ENCODE measurements at regions of chr4 and their contacts with region 1.

Region 1: DNA sequence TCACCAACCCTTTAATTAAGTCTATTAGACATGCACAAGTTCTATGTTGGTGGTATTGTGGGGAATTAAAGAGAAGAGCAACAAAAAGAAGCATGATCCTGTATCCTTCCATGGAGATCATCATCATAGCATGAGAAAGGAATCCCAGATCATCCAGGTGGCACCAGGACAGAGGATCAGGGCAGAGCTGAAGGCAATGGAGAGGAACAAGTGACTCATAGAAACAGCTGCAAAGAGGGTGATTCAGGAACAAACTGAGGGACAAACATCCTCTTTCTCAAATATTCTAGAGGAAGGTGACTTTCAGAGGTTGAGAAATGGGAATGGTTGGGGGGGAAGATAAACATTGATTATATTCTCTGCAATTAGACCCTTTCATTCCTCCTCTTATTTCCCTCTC is 105.5 kb upstream of the OTUD4 start:
- DNase-seq: no peak
- ATAC-seq: no peak
- H3K4me3 ChIP-seq: no peak overlapping the region
- H3K27ac ChIP-seq: no peak overlapping the region
- H3K4me1 ChIP-seq: peaks cover 0 to 8% (median 0%) of the 10 kb centered on the region in 12 donors
- H3K27me3 ChIP-seq: no peaks in the 10 kb centered on the region
- CTCF ChIP-seq: no peak
- POLR2A ChIP-seq: no peak

Region 2: GRCh38 chr4:145097821-145098674 is 187.9 kb before region 1 on chr4 and contains the starts of genes ABCE1 and ANAPC10:
- intact Hi-C with region 1: no loop called
- DNase-seq: peak; percentile 95 to 97 (median 96)
- ATAC-seq: peak; percentile 98 to 99 (median 98)
- H3K4me3 ChIP-seq: peak within 1 kb of the TSS; percentile 58 to 82 (median 70)
- H3K27ac ChIP-seq: peak within 1 kb of the TSS; percentile 73 to 95 (median 91)
- H3K4me1 ChIP-seq: peaks cover 3 to 55% (median 33%) of the 10 kb centered on the region in 12 donors
- H3K27me3 ChIP-seq: no peaks in the 10 kb centered on the region
- CTCF ChIP-seq: peak in 9 of 12 donors; percentile 9 to 50 (median 32)
- POLR2A ChIP-seq: peak in 1 of 2 donors; percentile 41
- total RNA-seq, gene ABCE1: 32.0 to 48.9 (median 40.1) TPM
- total RNA-seq, gene ANAPC10: 12.3 to 26.9 (median 13.6) TPM

Region 3: DNA sequence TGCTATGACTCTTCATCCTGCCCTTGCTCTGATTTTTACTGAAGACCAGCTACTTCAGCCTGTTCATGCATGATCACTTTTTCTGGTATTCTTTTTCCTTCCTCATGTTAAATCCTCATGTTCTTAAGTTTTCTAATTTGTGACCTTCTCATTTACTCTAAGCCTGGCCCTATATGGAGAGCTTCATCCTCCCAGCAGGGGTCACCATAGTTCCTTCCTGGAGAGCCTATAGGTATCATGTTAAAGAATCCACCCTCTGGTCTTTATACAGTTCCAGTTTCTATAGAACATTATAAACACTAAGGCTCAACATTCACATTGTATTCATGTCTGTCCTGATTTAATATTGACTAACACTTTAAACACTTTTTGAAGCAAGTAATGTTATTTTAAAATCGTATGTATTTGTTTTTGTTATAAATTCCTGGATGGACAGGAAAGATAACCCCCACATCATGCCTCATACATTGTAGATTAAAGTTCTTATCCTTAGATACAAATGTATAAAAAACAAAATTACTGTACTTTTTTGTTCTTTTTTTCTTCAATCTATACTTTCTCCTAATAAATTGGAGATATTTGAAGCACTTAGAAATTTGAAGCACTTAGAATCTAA is 51.7 kb before region 1 on chr4:
- intact Hi-C with region 1: loop called in 1 of 10 experiments (anchors 2 kb)
- DNase-seq: peak in 3 of 5 donors; percentile 24 to 44 (median 36)
- ATAC-seq: peak; percentile 73 to 83 (median 81)
- H3K4me3 ChIP-seq: no peak overlapping the region
- H3K27ac ChIP-seq: no peak overlapping the region
- H3K4me1 ChIP-seq: no peaks in the 10 kb centered on the region
- H3K27me3 ChIP-seq: no peaks in the 10 kb centered on the region
- CTCF ChIP-seq: peak; percentile 69 to 84 (median 74)
- POLR2A ChIP-seq: no peak

Measured in heart left ventricle (tissue), 16 donors.